PC-9 (cell line): ENCODE measurements at regions of chr15 and their contacts with region 1.

Region 1: GRCh38 chr15:77959432-77959879 is 118.1 kb downstream of the TBC1D2B start:
- DNase-seq: peak; percentile 40 to 80
- H3K4me3 ChIP-seq: no peak overlapping the region
- H3K27ac ChIP-seq: no peak overlapping the region
- H3K4me1 ChIP-seq: no peaks in the 10 kb centered on the region
- H3K27me3 ChIP-seq: 0 out of 2 replicates have a peak, but pooled peaks cover 3% of the 10 kb centered on the region
- CTCF ChIP-seq: peak; percentile 94

Region 2: DNA sequence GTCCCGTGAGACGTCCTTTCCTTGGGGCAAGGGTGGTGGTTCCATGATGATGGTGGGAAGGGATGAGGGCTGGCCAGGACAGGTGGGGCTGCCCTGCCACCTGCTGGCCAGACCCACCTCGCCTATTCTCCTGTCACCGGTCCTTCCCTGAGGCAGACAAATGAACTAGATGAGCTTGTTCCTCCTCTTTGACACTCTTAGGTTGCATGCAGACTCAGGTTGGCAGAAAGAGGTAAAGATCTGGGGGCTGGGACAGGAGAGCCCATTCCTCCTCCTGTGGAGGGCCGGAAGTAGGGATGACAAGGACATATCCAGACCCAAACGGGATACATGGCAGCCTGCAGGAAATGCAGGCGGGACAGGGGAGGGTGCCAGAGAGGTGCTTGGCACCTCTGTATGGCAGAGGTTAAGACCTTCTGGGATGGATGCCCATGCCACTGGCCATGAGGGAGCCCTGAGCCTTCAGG is 236.3 kb after region 1 on chr15:
- CTCF ChIA-PET with region 1: interaction called, 3 read pairs
- POLR2A ChIA-PET with region 1: no interaction called
- intact Hi-C with region 1: loop called (anchors 5 kb)
- DNase-seq: peak; percentile 46 to 53
- H3K4me3 ChIP-seq: no peak overlapping the region
- H3K27ac ChIP-seq: no peak overlapping the region
- H3K4me1 ChIP-seq: no peaks in the 10 kb centered on the region
- H3K27me3 ChIP-seq: no peaks in the 10 kb centered on the region
- CTCF ChIP-seq: peak; percentile 81

Region 3: GRCh38 chr15:78415286-78415685 is 455.8 kb after region 1 on chr15:
- CTCF ChIA-PET with region 1: interaction called, 4 read pairs
- POLR2A ChIA-PET with region 1: no interaction called
- intact Hi-C with region 1: loop called (anchors 5 kb)
- DNase-seq: no peak
- H3K4me3 ChIP-seq: no peak overlapping the region
- H3K27ac ChIP-seq: no peak overlapping the region
- H3K4me1 ChIP-seq: peaks cover 6% of the 10 kb centered on the region
- H3K27me3 ChIP-seq: no peaks in the 10 kb centered on the region
- CTCF ChIP-seq: peak; percentile 65